MCF 10A (cell line): ENCODE measurements at regions of chr1 and their contacts with region 1.

Region 1: GRCh38 chr1:43171876-43172526 is at the starts of genes CFAP57 and EBNA1BP2:
- DNase-seq: peak; percentile 93
- H3K4me3 Mint-ChIP-seq: peak within 1 kb of the TSS; percentile 94
- H3K27ac Mint-ChIP-seq: peak within 1 kb of the TSS; percentile 96
- H3K4me1 Mint-ChIP-seq: no peaks in the 10 kb centered on the region
- H3K27me3 Mint-ChIP-seq: no peaks in the 10 kb centered on the region
- CTCF ChIP-seq: no peak
- total RNA-seq, gene CFAP57: 0.17 and 0.44 TPM in 2 replicates
- total RNA-seq, gene EBNA1BP2: 159 and 171 TPM in 2 replicates

Region 2: GRCh38 chr1:43206600-43207228 is 34.7 kb after region 1 on chr1:
- CTCF ChIA-PET with region 1: interaction called, 5 read pairs
- POLR2A ChIA-PET with region 1: interaction called, 20 read pairs
- intact Hi-C with region 1: no loop called
- DNase-seq: peak; percentile 75
- H3K4me3 Mint-ChIP-seq: peak overlapping the region; percentile 68
- H3K27ac Mint-ChIP-seq: peak overlapping the region; percentile 89
- H3K4me1 Mint-ChIP-seq: peaks cover 18% of the 10 kb centered on the region
- H3K27me3 Mint-ChIP-seq: no peaks in the 10 kb centered on the region
- CTCF ChIP-seq: no peak